ENCODE measurements at regions of chr21 and their contacts with region 1.

Region 1: GRCh38 chr21:42047821-42048613 is 23.1 kb upstream of the UMODL1 start:
- DNase-seq: no peak
- H3K4me3 ChIP-seq: no peak overlapping the region
- H3K27ac ChIP-seq: no peak overlapping the region
- H3K4me1 ChIP-seq: no peaks in the 10 kb centered on the region
- H3K27me3 ChIP-seq: peaks cover 4% of the 10 kb centered on the region; the same call in 1 of the 2 replicates
- CTCF ChIP-seq: no peak

Region 2: DNA sequence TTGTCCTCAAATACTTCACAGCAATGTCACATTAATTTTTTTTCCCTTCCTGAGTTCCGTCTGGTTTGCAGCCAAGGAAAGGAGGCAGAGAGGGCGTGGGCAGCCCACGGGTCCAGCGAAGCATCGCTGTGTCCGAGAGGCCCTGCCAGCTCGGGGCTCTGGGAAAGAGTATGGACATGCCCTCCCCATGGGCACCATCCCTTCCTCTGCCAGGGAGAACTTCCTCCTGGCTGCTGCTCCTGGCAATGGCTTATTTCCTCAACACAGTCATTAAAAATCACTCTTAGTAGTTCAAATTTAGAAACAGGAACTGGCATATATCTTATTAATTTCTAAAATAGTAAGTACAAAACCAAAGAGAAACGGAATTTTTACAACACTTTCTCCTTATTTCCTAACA is 396.6 kb before region 1 on chr21:
- CTCF ChIA-PET with region 1: no interaction called
- POLR2A ChIA-PET with region 1: interaction called, 11 read pairs
- intact Hi-C with region 1: no loop called
- DNase-seq: no peak
- H3K4me3 ChIP-seq: no peak overlapping the region
- H3K27ac ChIP-seq: peak overlapping the region; percentile 14; the same call in 1 of the 2 replicates
- H3K4me1 ChIP-seq: peaks cover 38% of the 10 kb centered on the region
- H3K27me3 ChIP-seq: no peaks in the 10 kb centered on the region
- CTCF ChIP-seq: no peak

Measured in PC-9 (cell line).